ENCODE measurements at regions of chr15 and their contacts with region 1.

Region 1: DNA sequence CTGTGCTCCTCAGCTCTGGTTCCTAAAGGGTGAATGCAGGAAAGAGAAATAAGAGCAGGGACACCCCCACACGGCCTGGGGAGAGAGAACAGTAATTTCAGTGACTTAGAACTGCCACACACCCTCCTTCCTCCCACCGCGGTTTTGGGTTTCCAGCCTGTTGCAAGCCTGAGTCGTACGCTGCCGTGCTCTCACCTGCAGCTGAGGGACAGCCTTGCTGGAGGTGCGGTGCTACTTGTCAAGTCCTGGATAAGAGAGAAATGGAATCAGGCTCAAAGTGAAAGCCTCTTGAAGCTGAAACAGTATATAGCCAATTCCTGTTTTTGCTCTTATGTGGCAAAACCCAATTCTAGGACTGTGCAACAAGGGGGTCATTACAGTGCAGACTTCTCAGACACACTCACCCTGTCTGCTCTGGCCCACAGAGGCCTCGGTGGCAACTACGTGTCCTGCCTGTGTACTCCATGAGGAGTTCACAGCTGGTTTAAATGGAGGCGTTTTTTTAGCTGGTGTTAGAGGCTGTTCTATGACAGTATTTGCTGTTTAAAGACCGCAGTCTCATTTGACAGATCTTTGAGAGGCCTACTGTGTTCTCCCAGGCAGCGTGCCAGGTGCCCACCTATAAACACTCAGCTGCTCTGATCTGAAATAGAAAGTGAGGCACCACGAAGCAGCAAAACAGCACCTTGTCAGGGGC is 42.9 kb downstream of the TBC1D2B start:
- DNase-seq: peak; percentile 53 to 84 (median 73)
- ATAC-seq: peak; percentile 87 to 89
- H3K4me3 Mint-ChIP-seq: peak overlapping the region; percentile 65 to 81 (median 79)
- H3K27ac Mint-ChIP-seq: peak overlapping the region; percentile 92 to 98 (median 95)
- H3K4me1 Mint-ChIP-seq: peaks cover 45 to 83% (median 79%) of the 10 kb centered on the region in 4 donors
- H3K27me3 Mint-ChIP-seq: no peaks in the 10 kb centered on the region

Region 2: DNA sequence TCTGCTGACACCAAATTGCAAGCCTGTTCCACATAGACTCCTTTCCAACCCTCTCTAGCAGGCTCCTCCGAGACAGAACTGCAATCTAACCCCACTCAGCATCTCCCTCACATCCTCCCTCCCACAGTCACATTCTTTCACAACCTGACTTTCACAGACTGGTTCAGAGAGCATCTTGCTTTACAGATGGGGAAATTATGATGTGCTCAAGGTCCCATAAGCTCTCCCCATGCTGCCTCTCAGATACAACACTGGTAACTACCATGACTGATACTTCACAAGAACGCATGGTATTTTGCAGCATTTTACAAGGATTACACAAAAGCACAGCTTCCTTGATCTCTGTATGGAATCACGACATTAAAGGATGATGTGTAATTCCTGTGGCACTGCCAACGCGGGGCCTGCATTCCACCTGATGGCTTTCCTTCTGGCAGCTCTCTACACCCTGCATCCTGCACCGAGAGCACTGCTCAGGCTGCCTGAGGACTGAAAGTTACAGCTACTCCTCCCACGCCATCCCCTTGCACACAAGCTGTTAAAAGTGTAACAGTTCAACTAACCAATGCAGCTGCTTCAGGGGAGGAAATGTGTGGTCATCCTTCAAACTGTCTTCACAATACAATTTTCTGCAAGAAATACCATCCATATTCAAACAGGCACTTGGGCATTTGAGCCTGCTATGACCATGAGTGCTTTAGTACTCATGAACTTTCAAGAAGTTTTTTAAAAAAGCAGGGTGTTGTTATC is 15.2 kb after region 1 on chr15:
- POLR2A ChIA-PET with region 1: interaction called, 29 read pairs
- DNase-seq: peak in 4 of 10 donors; percentile 44 to 52 (median 48)
- ATAC-seq: peak; percentile 56 to 70
- H3K4me3 Mint-ChIP-seq: peak overlapping the region; percentile 58 to 88 (median 76)
- H3K27ac Mint-ChIP-seq: peak overlapping the region; percentile 84 to 96 (median 94)
- H3K4me1 Mint-ChIP-seq: peaks cover 51 to 97% (median 95%) of the 10 kb centered on the region in 4 donors
- H3K27me3 Mint-ChIP-seq: no peaks in the 10 kb centered on the region

Region 3: GRCh38 chr15:78056714-78057269 is 22.1 kb after region 1 on chr15:
- POLR2A ChIA-PET with region 1: interaction called, 29 read pairs
- DNase-seq: no peak
- ATAC-seq: peak; percentile 41 to 50
- H3K4me3 Mint-ChIP-seq: peak overlapping the region; percentile 37 to 82 (median 77)
- H3K27ac Mint-ChIP-seq: peak overlapping the region; percentile 55 to 96 (median 93)
- H3K4me1 Mint-ChIP-seq: peaks cover 54 to 93% (median 85%) of the 10 kb centered on the region in 4 donors
- H3K27me3 Mint-ChIP-seq: no peaks in the 10 kb centered on the region

Region 4: GRCh38 chr15:78061963-78062435 is 27.4 kb after region 1 on chr15:
- POLR2A ChIA-PET with region 1: interaction called, 50 read pairs
- DNase-seq: peak in 4 of 10 donors; percentile 31 to 56 (median 40)
- ATAC-seq: peak; percentile 79 to 86
- H3K4me3 Mint-ChIP-seq: peak overlapping the region; percentile 68 to 92 (median 80)
- H3K27ac Mint-ChIP-seq: peak overlapping the region in 9 of 10 donors; percentile 82 to 96 (median 94)
- H3K4me1 Mint-ChIP-seq: peaks cover 37 to 49% (median 47%) of the 10 kb centered on the region in 4 donors
- H3K27me3 Mint-ChIP-seq: no peaks in the 10 kb centered on the region

Region 5: DNA sequence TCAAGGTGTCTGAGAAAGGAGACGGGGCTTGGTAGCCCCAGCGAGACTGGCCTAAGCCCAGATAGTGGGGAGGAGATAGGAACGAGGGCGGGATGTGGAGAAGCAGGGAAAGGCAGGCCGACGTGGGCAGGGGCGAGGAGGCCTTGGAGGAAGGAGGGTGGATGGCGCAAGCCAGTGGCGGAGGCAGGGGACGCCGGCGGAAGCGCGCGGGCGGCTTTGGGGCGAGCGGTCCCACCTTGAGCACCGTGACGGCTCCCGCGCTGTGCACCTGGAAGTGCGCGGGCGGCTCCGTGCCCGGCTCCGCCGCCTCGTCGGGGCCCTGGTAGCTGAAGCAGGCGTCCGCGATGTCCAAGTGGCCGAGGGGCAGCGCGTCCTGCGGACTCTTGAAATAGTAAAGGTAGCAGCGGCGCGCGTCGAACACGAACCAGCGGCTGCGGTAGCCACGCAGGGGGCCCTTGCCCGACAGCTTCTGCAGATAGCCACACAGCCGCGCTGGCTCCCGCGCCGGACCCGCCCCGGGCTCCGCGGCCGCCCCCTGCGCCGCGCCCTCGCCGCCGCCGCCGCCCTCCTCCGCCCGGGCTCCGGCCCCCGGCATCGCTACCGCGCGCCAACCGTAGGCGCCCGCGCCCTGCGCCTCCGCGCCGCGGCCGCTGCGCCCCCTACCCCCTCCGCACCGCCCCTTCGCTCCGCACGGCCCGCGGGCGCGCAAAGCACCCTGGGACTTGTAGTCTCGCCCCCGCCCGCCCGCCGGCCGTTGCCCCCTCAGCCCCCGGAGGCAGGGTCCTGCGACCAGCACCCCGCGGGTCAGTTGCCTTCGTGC is 42.6 kb after region 1 on chr15 and contains the start of gene TBC1D2B:
- POLR2A ChIA-PET with region 1: interaction called, 20 read pairs
- DNase-seq: peak; percentile 53 to 83 (median 68)
- ATAC-seq: peak; percentile 82 to 89
- H3K4me3 Mint-ChIP-seq: peak within 1 kb of the TSS; percentile 95 to 100 (median 98)
- H3K27ac Mint-ChIP-seq: peak within 1 kb of the TSS; percentile 94 to 99 (median 96)
- H3K4me1 Mint-ChIP-seq: peaks cover 25 to 51% (median 49%) of the 10 kb centered on the region in 4 donors
- H3K27me3 Mint-ChIP-seq: no peaks in the 10 kb centered on the region
- polyA plus RNA-seq, gene TBC1D2B: 8.1 to 14.0 (median 8.5) TPM

Measured in naive thymus-derived CD8-positive, alpha-beta T cell (primary cell).